Activated CD4-positive, alpha-beta memory T cell treated with anti-CD3 and anti-CD28 coated beads for 36 hours (primary cell): ENCODE measurements at regions of chr12 and their contacts with region 1.

Region 1: DNA sequence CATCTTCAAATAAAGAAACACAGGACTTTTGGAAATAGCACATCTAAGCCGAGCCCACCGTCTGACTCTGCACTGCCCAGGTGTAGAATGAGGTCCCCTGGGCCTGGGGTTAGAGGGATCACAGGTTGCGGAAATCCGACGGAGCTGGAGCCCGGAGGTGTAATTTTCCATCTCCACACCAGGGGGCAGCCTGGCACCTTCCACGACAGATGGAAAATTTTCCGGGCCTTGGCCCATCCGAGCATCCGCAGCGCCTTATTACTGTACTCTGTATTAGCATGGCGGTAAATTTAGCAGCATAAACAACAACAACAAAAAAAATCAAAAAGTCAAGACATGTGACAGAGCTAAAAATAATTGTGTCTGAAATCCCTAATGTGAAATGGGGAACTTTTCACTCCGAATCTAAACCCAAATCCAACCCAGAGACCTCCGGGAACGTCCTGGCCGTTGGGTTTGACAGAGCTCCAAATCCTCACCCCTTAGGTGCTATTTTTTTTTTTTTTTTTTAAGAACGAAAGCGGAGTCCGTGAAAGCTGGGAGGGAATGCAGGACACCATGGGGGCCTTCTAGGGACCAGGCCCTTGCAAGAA is 93.9 kb downstream of the KSR2 start:
- DNase-seq: peak; percentile 85
- H3K4me3 Mint-ChIP-seq: no peak overlapping the region
- H3K27ac Mint-ChIP-seq: no peak overlapping the region
- H3K4me1 Mint-ChIP-seq: peaks cover 14% of the 10 kb centered on the region
- H3K27me3 Mint-ChIP-seq: peaks cover 13% of the 10 kb centered on the region

Region 2: DNA sequence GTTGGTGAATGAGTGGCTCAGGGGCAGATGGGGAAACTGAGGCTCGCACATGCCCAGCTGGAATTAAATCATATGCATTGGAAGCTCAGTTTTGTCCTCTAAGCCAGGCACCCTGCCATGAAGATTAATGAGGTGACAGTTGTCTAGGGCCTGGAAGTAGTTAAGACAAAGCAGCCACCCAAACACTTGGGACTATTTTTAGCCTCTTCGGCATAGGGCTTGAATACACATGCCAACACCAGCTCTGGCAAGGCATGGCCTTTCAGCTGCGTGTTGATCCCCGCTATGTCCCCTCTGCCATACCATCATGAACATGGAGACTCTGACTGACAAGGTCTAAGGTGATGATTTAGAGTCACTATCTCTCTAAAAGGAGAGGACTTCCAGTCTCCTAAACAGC is 156.4 kb before region 1 on chr12:
- CTCF ChIA-PET with region 1: no interaction called
- POLR2A ChIA-PET with region 1: no interaction called
- intact Hi-C with region 1: no loop called
- DNase-seq: no peak
- H3K4me3 Mint-ChIP-seq: no peak overlapping the region
- H3K27ac Mint-ChIP-seq: no peak overlapping the region
- H3K4me1 Mint-ChIP-seq: no peaks in the 10 kb centered on the region
- H3K27me3 Mint-ChIP-seq: no peaks in the 10 kb centered on the region

Region 3: GRCh38 chr12:117850048-117850447 is 24.9 kb before region 1 on chr12:
- CTCF ChIA-PET with region 1: interaction called, 10 read pairs
- POLR2A ChIA-PET with region 1: no interaction called
- intact Hi-C with region 1: no loop called
- DNase-seq: peak; percentile 13
- H3K4me3 Mint-ChIP-seq: no peak overlapping the region
- H3K27ac Mint-ChIP-seq: no peak overlapping the region
- H3K4me1 Mint-ChIP-seq: no peaks in the 10 kb centered on the region
- H3K27me3 Mint-ChIP-seq: peaks cover 4% of the 10 kb centered on the region

Region 4: GRCh38 chr12:117968826-117969659 is 94.1 kb after region 1 on chr12 and contains the start of gene KSR2:
- CTCF ChIA-PET with region 1: no interaction called
- POLR2A ChIA-PET with region 1: no interaction called
- intact Hi-C with region 1: loop called (anchors 5 kb)
- DNase-seq: peak; percentile 70
- H3K4me3 Mint-ChIP-seq: peak within 1 kb of the TSS; percentile 80
- H3K27ac Mint-ChIP-seq: no peak within 1 kb of the TSS
- H3K4me1 Mint-ChIP-seq: peaks cover 8% of the 10 kb centered on the region
- H3K27me3 Mint-ChIP-seq: peaks cover 52% of the 10 kb centered on the region
- total RNA-seq, gene KSR2: 0.12 to 0.45 TPM

Region 5: DNA sequence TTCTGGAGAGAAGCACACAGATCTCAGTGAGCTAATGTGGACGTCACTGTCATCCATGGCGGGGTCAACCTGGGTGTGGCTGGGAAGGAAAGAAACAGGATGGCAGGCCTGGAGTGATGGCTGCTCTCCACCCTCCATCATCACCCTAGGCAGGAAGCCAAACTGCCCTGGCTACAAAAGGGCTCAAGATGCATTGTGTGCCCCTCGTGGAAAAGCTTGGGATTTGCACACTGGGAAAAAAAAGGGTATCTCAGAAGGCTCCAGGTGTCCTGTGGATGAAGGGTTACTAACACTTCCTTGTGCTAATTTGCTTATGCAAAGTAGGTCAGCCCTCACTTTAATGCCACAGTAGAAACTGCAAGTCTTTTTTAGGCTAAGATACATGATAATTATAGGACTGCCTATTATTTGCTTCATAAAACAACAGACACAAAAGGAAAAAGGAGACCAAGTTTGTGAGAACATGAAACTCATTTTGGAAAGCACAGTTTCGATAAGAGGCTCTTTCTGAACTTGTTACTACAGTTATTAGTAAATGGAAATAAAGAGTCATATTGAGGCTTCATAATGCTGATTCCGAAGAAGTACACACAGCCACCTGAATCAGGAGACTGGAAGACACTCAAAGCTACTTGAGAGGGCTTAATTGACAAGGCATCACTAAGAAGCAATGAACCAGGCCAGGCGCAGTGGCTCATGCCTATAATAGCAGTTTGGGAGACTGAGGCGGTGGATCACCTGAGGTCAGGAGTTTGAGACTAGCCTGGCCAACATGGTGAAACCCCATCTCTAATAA is 160.5 kb after region 1 on chr12:
- CTCF ChIA-PET with region 1: interaction called, 22 read pairs
- POLR2A ChIA-PET with region 1: interaction called, 4 read pairs
- intact Hi-C with region 1: loop called (anchors 1 kb)
- DNase-seq: peak; percentile 55
- H3K4me3 Mint-ChIP-seq: peak overlapping the region; percentile 31
- H3K27ac Mint-ChIP-seq: peak overlapping the region; percentile 94
- H3K4me1 Mint-ChIP-seq: peaks cover 57% of the 10 kb centered on the region
- H3K27me3 Mint-ChIP-seq: no peaks in the 10 kb centered on the region

Region 6: GRCh38 chr12:118061011-118061875 is 186.3 kb after region 1 on chr12 and contains the start of gene WSB2:
- CTCF ChIA-PET with region 1: interaction called, 14 read pairs
- POLR2A ChIA-PET with region 1: interaction called, 7 read pairs
- intact Hi-C with region 1: loop called (anchors 2 kb)
- DNase-seq: peak; percentile 73
- H3K4me3 Mint-ChIP-seq: peak within 1 kb of the TSS; percentile 81
- H3K27ac Mint-ChIP-seq: peak within 1 kb of the TSS; percentile 92
- H3K4me1 Mint-ChIP-seq: peaks cover 48% of the 10 kb centered on the region
- H3K27me3 Mint-ChIP-seq: no peaks in the 10 kb centered on the region
- total RNA-seq, gene WSB2: 93.2 to 102 TPM

Region 7: DNA sequence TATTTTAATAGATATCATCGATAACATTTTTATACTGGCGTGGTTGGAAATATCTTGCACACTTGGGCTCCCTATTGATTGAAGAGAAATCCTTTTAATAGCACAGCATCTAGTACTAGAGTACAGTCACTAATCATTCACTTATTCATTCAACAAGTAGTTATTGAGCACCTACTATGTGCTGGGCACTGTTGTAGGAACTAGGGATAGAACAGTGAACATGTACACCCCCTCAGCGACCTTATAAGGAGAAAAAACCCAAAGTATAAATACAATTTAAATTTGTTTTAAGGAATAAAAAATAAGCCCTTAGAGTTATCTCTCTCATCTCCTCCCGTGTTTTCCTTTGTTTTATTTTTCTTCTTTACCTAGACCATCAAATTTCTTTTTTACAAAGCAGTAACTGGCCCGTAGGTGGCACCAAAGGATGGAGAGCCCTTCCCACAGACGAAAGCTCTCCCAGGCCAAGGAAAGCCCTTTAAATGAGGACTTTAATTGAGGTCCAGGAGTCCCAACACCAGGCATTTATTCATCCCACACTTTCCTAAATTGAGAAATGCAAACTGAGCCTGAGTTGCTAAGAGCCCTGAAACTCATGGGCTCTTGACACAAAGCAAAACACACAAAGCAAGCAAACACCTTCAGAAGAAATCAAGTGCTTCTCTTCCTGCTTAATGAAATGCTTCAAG is 290.0 kb after region 1 on chr12:
- CTCF ChIA-PET with region 1: interaction called, 9 read pairs
- POLR2A ChIA-PET with region 1: no interaction called
- intact Hi-C with region 1: loop called (anchors 10 kb)
- DNase-seq: peak; percentile 33
- H3K4me3 Mint-ChIP-seq: no peak overlapping the region
- H3K27ac Mint-ChIP-seq: peak overlapping the region; percentile 30
- H3K4me1 Mint-ChIP-seq: peaks cover 37% of the 10 kb centered on the region
- H3K27me3 Mint-ChIP-seq: no peaks in the 10 kb centered on the region